Prostate gland (tissue), 2 donors: ENCODE measurements at regions of chr1 and their contacts with region 1.

Region 1: DNA sequence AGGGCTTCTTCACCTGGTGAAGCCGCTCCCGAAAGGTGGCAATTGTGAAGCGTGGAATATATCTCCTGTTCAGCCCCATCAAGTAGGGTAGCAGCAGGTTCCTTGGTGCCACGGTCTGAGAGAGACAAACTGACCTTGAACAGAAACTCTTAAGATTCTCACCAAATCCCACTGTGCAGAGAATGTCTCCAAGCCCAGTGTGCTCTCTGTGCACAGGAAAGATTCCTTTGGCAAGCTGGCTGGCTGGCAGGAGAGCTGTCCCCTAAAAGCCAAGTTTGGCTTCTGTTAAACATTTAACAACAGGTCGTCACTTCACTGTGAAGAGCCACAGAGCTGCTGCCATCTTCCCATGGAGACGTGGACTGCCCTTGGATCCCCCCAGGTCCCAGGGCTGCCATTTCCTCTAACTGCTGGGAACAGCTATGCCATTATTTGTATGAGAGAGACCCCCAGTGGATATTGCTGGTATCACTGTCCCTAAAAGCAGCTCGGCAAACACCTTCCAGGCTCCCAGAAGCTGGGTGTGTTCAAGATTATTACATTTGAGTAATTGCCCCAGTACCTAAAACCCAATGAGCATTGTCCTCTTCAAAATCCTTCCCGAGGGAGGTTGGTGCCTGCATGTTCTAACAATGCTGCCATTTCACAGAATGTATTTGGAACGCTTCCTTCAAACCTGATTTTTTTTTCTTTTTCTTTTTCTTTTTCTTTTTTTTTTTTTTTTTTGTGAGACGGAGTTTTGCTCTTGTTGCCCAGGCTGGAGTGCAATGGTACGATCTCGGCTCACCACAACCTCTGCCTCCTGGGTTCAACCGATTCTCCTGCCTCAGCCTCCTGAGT is 71.8 kb downstream of the CD58 start:
- DNase-seq: peak; percentile 66
- H3K4me3 ChIP-seq: no peak overlapping the region
- H3K27ac ChIP-seq: no peak overlapping the region
- H3K4me1 ChIP-seq: no peaks in the 10 kb centered on the region
- H3K27me3 ChIP-seq: no peaks in the 10 kb centered on the region
- CTCF ChIP-seq: peak; percentile 44 to 91 (median 80)
- POLR2A ChIP-seq: no peak

Region 2: DNA sequence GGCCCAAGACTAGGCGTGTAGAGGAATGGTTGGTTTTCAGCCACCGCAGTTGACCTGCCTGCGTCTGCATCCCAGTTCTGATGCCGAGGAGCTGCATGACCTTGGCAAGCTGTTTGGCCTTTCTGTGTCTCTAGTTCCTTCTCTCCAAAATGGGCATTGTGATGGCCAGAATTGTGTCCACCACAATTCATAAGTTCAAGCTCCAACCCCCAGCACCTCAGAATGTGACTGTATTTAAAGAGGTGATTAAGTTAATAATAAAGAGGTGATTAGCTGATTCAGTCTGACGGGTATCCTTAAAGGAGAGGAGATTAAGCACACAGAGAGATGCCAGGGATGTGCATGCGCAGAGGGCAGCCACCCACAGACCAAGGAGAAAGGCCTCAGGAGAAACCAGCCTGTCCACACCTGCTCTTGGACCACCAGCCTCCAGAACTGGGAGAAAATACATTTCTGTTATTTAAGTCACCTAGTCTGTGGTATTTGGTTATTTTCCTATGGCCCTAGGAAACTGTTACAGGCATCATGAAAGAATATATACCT is 359.3 kb before region 1 on chr1:
- intact Hi-C with region 1: loop called (anchors 2 kb)
- DNase-seq: no peak
- H3K4me3 ChIP-seq: no peak overlapping the region
- H3K27ac ChIP-seq: no peak overlapping the region
- H3K4me1 ChIP-seq: no peaks in the 10 kb centered on the region
- H3K27me3 ChIP-seq: no peaks in the 10 kb centered on the region
- CTCF ChIP-seq: no peak
- POLR2A ChIP-seq: no peak